Activated CD4-positive, alpha-beta memory T cell treated with anti-CD3 and anti-CD28 coated beads, Interleukin-2, amount 10 ng/mL, durations not matched to agents 7 days and 5 days (primary cell): ENCODE measurements at regions of chr2 and their contacts with region 1.

Region 1: GRCh38 chr2:126971481-126972278 is 73.0 kb downstream of the TEX51 start:
- DNase-seq: peak; percentile 65
- H3K4me3 Mint-ChIP-seq: no peak overlapping the region
- H3K27ac Mint-ChIP-seq: no peak overlapping the region
- H3K4me1 Mint-ChIP-seq: peaks cover 2% of the 10 kb centered on the region
- H3K27me3 Mint-ChIP-seq: peaks cover 43% of the 10 kb centered on the region

Region 2: DNA sequence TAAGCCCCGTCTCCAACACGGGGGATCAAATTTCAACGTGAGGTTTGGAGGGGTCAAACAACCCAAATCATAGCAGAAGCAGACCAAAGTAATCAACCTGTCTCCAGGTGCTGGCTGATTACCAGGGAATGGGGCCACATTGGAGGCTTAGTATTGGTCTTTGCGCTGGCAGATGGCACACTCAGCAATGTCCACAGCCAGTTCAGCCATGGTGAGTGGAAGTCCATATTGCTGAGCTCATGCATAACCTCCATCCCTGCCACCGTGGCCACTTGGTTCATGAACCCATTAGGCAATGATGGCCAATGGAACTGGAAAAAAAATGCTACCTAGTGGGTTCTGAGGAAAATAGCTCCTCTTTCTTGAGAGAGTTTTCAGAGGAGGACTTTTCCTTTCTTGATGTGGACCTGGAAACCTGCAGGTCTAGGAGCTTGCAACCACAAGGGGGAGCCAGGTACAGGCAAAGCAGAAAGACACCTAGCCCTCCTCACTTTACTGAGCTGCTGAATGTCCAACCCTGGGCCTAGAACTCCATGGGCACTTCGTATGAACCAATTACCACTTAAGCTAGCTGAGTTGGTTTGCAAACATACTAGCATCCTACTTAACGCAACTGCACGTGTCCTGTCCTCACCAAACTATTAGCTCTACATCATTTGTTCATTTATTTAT is 443.7 kb before region 1 on chr2:
- CTCF ChIA-PET with region 1: interaction called, 10 read pairs
- POLR2A ChIA-PET with region 1: no interaction called
- DNase-seq: peak; percentile 71
- H3K4me3 Mint-ChIP-seq: no peak overlapping the region
- H3K27ac Mint-ChIP-seq: no peak overlapping the region
- H3K4me1 Mint-ChIP-seq: no peaks in the 10 kb centered on the region
- H3K27me3 Mint-ChIP-seq: peaks cover 1% of the 10 kb centered on the region